Adrenal gland (tissue), 19 donors: ENCODE measurements at regions of chr2 and their contacts with region 1.

Region 1: GRCh38 chr2:26244309-26245121 is at the starts of genes HADHA and HADHB:
- DNase-seq: peak; percentile 90 to 93 (median 93)
- H3K4me3 ChIP-seq: peak within 1 kb of the TSS; percentile 30 to 93 (median 80)
- H3K27ac ChIP-seq: peak within 1 kb of the TSS; percentile 95 to 100 (median 96)
- H3K4me1 ChIP-seq: peaks cover 27 to 66% of the 10 kb centered on the region in 2 donors
- H3K27me3 ChIP-seq: no peaks in the 10 kb centered on the region
- CTCF ChIP-seq: peak in 5 of 6 experiments; percentile 26 to 49 (median 30)
- POLR2A ChIP-seq: peak; percentile 67 to 84
- total RNA-seq, gene HADHA: 154 to 353 (median 222) TPM
- total RNA-seq, gene HADHB: 304 to 496 (median 366) TPM

Region 2: GRCh38 chr2:26299471-26300101 is 55.1 kb after region 1 on chr2:
- intact Hi-C with region 1: loop called in 1 of 2 experiments (anchors 10 kb)
- DNase-seq: peak in 6 of 7 donors; percentile 23 to 61 (median 42)
- H3K4me3 ChIP-seq: peak overlapping the region; percentile 11 to 64 (median 18)
- H3K27ac ChIP-seq: peak overlapping the region; percentile 58 to 88 (median 78)
- H3K4me1 ChIP-seq: peaks cover 7 to 20% of the 10 kb centered on the region in 2 donors
- H3K27me3 ChIP-seq: no peaks in the 10 kb centered on the region
- CTCF ChIP-seq: no peak
- POLR2A ChIP-seq: peak in 1 of 2 donors; percentile 8

Region 3: DNA sequence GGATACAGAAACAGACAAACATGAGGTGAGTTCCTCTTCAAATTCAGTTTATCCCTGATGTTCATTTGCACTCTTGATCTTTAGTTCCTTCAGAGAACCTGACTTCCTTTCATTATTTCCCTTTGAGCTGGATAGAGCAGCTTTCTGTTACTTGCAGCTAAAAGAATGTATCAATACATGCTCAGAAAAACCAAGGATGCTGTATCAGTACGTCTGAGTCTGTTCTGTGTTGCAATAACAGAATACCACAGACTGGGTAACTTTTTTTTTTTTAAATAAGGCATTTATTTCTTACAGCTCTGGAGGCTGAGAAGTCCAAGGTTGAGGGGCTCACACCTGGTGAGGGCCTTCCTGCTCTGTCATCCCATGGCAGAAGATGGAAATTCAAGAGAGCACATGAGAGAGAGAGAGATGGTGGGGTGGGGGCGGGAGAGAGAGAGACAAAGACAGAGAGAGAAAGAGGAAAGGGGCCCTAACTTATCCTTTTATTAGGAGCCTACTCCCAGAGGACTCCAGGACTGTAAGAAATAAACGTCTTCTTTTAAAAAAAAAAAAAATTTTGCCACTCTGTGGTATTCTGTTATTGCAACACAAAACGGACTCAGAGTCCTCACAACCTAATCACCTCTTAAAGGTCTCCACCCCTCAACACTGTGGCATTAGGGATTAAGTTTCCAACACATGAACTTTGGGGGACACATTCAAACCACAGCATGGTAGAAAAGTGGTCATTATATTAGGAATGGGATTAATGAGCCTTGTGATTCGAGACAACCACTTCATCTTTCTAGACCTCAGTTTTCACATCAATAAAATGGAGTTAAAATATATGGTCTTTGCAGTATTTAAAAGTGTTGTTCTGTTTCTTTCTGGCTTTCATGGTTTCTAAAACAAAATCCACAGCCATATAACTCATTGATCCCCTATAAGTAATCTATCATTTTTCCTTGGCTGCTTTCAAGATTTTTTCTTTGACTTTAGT is 83.1 kb after region 1 on chr2:
- intact Hi-C with region 1: loop called in 1 of 2 experiments (anchors 10 kb)
- DNase-seq: no peak
- H3K4me3 ChIP-seq: no peak overlapping the region
- H3K27ac ChIP-seq: no peak overlapping the region
- H3K4me1 ChIP-seq: peaks cover 0 to 4% of the 10 kb centered on the region in 2 donors
- H3K27me3 ChIP-seq: no peaks in the 10 kb centered on the region
- CTCF ChIP-seq: no peak
- POLR2A ChIP-seq: no peak

Region 4: GRCh38 chr2:26735096-26735495 is 490.6 kb after region 1 on chr2:
- intact Hi-C with region 1: loop called in 1 of 2 experiments (anchors 10 kb)
- DNase-seq: peak; percentile 69 to 89 (median 81)
- H3K4me3 ChIP-seq: no peak overlapping the region
- H3K27ac ChIP-seq: peak overlapping the region; percentile 83 to 94 (median 85)
- H3K4me1 ChIP-seq: peaks cover 21 to 30% of the 10 kb centered on the region in 2 donors
- H3K27me3 ChIP-seq: no peaks in the 10 kb centered on the region
- CTCF ChIP-seq: no peak
- POLR2A ChIP-seq: peak in 1 of 2 donors; percentile 35